Caco-2 (cell line): ENCODE measurements at regions of chr7 and their contacts with region 1.

Region 1: GRCh38 chr7:97006036-97006815 is 873 bp downstream of the DLX6 start:
- DNase-seq: peak; percentile 82
- H3K4me3 ChIP-seq: peak overlapping the region; percentile 80
- H3K4me3 Mint-ChIP-seq: peak overlapping the region; percentile 86
- H3K27ac Mint-ChIP-seq: peak overlapping the region; percentile 66
- H3K4me1 ChIP-seq: peaks cover 6% of the 10 kb centered on the region; the same call in 1 of the 2 replicates
- H3K4me1 Mint-ChIP-seq: no peaks in the 10 kb centered on the region
- H3K27me3 ChIP-seq: no peaks in the 10 kb centered on the region
- H3K27me3 Mint-ChIP-seq: no peaks in the 10 kb centered on the region
- CTCF ChIP-seq: no peak

Region 2: DNA sequence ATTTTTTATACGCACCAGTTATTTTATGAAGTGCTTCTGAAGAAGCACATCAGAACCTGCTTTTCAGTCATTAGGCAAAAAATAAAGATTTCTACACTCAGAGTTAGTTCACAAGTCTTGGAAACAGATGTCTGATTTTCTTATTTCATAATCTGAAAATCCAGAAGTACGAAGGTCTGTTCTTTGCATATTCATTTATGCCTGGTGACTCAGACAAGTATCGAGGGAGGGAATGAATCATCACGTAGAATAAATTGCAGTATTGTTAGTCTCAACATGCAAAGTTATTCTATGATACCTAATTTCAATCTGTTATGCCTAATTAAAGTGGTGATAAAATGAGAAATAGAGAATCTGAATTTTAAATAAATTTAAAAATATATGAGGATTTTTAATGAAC is 183.0 kb before region 1 on chr7:
- CTCF ChIA-PET with region 1: no interaction called
- POLR2A ChIA-PET with region 1: no interaction called
- intact Hi-C with region 1: no loop called
- DNase-seq: no peak
- H3K4me3 ChIP-seq: no peak overlapping the region
- H3K4me3 Mint-ChIP-seq: no peak overlapping the region
- H3K27ac Mint-ChIP-seq: no peak overlapping the region
- H3K4me1 ChIP-seq: no peaks in the 10 kb centered on the region
- H3K4me1 Mint-ChIP-seq: no peaks in the 10 kb centered on the region
- H3K27me3 ChIP-seq: no peaks in the 10 kb centered on the region
- H3K27me3 Mint-ChIP-seq: peaks cover 4% of the 10 kb centered on the region
- CTCF ChIP-seq: no peak

Region 3: GRCh38 chr7:96931823-96932222 is 74.4 kb before region 1 on chr7:
- CTCF ChIA-PET with region 1: no interaction called
- POLR2A ChIA-PET with region 1: no interaction called
- intact Hi-C with region 1: no loop called
- DNase-seq: no peak
- H3K4me3 ChIP-seq: no peak overlapping the region
- H3K4me3 Mint-ChIP-seq: no peak overlapping the region
- H3K27ac Mint-ChIP-seq: no peak overlapping the region
- H3K4me1 ChIP-seq: no peaks in the 10 kb centered on the region
- H3K4me1 Mint-ChIP-seq: no peaks in the 10 kb centered on the region
- H3K27me3 ChIP-seq: no peaks in the 10 kb centered on the region
- H3K27me3 Mint-ChIP-seq: peaks cover 13% of the 10 kb centered on the region
- CTCF ChIP-seq: no peak

Region 4: GRCh38 chr7:97043281-97043680 is 37.1 kb after region 1 on chr7:
- CTCF ChIA-PET with region 1: no interaction called
- POLR2A ChIA-PET with region 1: no interaction called
- intact Hi-C with region 1: no loop called
- DNase-seq: no peak
- H3K4me3 ChIP-seq: no peak overlapping the region
- H3K4me3 Mint-ChIP-seq: no peak overlapping the region
- H3K27ac Mint-ChIP-seq: no peak overlapping the region
- H3K4me1 ChIP-seq: no peaks in the 10 kb centered on the region
- H3K4me1 Mint-ChIP-seq: no peaks in the 10 kb centered on the region
- H3K27me3 ChIP-seq: no peaks in the 10 kb centered on the region
- H3K27me3 Mint-ChIP-seq: peaks cover 10% of the 10 kb centered on the region
- CTCF ChIP-seq: no peak

Region 5: DNA sequence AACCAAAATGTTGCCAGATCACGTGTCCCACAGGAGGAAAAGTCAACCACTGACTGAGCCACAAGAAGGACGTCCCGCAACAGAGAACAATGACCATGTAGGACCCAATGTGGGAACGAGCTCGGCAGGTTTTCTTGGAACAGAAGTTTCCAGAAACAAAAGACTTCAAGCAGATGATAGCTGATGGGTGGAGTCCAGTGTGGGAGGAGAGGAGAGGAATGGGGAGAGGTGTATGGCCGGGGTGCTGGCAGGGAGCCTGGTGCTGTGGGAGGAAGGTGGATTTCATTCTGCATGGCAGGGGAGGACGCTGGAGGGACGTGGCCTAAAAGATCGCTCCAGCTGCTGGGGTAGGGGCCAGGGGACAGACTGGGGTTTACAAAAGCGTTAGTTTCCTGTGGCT is 1051.9 kb after region 1 on chr7:
- CTCF ChIA-PET with region 1: no interaction called
- POLR2A ChIA-PET with region 1: interaction called, 16 read pairs
- intact Hi-C with region 1: no loop called
- DNase-seq: no peak
- H3K4me3 ChIP-seq: no peak overlapping the region
- H3K4me3 Mint-ChIP-seq: no peak overlapping the region
- H3K27ac Mint-ChIP-seq: no peak overlapping the region
- H3K4me1 ChIP-seq: peaks cover 13% of the 10 kb centered on the region; the same call in 1 of the 2 replicates
- H3K4me1 Mint-ChIP-seq: peaks cover 6% of the 10 kb centered on the region
- H3K27me3 ChIP-seq: no peaks in the 10 kb centered on the region
- H3K27me3 Mint-ChIP-seq: no peaks in the 10 kb centered on the region
- CTCF ChIP-seq: no peak